ENCODE measurements at regions of chr17 and their contacts with region 1.

Region 1: DNA sequence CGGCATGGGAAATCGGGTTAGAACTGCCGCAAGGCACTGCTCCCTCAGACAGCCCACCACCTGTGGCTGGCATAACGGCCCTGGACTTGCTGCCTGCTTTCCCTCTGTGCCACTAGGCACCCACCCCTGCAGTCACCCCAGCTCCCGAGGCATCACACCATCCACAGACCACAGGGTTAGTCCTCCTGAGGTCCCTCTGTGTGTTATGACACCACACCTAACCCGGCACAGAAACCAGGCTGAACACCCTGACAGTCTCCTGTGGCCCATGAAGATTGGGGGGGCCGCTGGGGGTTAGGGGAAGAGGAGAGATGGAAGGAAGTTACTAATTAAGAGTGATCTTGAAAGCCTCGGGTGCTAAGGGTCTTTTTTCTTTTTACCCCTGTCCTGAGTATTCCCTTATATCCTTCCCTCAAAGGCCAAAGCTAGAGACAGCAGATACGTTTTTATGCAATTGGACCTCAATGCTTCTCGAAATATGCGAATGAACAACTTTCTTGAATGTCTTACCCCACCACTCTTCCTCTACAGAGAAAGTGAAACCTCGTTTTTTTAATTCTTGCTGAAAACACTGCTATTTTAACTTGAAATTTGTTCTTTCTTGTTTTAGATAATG is 7.0 kb downstream of the CYTH1 start:
- DNase-seq: peak; percentile 86
- H3K4me3 Mint-ChIP-seq: peak overlapping the region; percentile 82
- H3K27ac Mint-ChIP-seq: peak overlapping the region; percentile 97
- H3K4me1 Mint-ChIP-seq: peaks cover 65% of the 10 kb centered on the region
- H3K27me3 Mint-ChIP-seq: no peaks in the 10 kb centered on the region

Region 2: DNA sequence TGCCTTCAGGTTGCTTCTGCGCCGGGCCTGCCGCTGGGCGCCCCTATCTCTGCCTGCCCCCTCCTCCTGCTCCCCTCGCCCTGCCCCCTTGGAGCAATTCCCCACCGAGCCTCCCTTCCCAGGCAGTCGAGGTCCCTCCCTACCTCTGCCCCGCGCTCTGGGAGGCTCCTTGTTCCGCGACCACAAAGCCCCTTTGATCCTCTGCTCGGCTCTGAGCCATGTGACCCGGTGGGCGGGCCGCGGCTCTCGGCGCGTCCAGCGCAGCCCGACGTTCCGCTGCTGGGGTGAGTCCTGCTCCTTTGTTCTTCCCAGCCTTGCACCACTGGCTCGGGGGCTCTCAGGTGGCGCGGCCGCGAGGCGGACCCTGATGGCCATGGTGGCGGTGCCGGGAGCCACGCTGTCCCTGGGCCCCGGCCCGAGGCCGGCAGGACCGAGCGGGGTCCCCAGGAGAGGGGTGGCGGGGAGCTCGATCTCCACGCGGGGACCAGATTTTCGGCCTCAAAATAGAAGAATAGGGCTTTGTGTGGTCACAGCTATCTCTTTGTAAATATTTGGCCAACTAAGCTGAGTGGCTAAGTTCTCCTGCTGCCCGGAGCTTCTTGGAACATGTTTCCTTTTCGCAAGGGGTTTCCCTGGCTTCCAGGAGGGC is 1323.7 kb before region 1 on chr17:
- CTCF ChIA-PET with region 1: no interaction called
- intact Hi-C with region 1: loop called (anchors 10 kb)
- DNase-seq: peak; percentile 83
- H3K4me3 Mint-ChIP-seq: peak overlapping the region; percentile 86
- H3K27ac Mint-ChIP-seq: peak overlapping the region; percentile 100
- H3K4me1 Mint-ChIP-seq: peaks cover 42% of the 10 kb centered on the region
- H3K27me3 Mint-ChIP-seq: no peaks in the 10 kb centered on the region

Region 3: DNA sequence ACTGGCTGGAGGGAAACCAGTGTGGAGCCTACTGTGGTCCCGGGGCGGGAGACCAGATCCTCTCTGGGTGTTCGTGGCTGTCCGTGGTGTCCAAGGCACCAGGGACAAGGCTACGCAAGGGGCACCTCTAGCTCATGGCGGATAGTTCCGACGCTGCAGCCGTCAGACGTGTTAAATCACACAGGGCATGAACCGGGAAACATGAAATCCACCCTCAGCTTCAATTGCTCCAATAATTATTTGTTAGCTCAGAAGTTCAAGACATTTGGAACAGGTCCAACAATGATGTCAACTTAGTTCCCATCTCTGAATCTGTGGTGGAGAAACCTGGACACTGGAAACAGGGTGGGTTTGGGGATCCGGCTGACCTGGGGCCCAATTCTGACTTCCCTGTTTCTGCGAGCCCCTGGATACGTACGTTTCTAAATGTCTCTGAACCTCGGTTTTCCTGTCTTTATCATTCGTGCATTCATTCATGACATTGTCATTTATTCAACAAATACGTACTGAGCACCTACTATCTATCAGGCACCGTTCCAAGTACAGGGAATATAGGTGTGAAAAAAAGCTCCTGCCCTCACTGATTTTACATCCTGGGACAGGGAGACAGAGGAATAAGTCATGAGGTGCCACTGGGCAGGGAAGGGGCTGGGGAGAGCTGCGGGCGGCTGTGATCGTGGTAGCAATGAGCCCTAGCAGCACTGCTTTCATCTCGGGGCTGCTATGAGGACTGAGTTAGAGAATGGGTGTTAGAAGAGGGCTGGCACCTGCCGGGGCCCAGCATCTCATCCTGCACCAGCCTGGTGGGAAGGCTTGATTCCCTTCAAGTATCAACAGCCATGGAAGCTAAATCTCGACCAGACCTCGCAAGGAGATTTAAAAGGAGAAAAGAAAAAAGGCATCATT is 109.8 kb before region 1 on chr17:
- CTCF ChIA-PET with region 1: no interaction called
- intact Hi-C with region 1: no loop called
- DNase-seq: no peak
- H3K4me3 Mint-ChIP-seq: no peak overlapping the region
- H3K27ac Mint-ChIP-seq: peak overlapping the region; percentile 7
- H3K4me1 Mint-ChIP-seq: peaks cover 21% of the 10 kb centered on the region
- H3K27me3 Mint-ChIP-seq: no peaks in the 10 kb centered on the region

Region 4: GRCh38 chr17:78828470-78829185 is 53.6 kb after region 1 on chr17:
- CTCF ChIA-PET with region 1: no interaction called
- intact Hi-C with region 1: no loop called
- DNase-seq: peak; percentile 56
- H3K4me3 Mint-ChIP-seq: no peak overlapping the region
- H3K27ac Mint-ChIP-seq: peak overlapping the region; percentile 74
- H3K4me1 Mint-ChIP-seq: peaks cover 21% of the 10 kb centered on the region
- H3K27me3 Mint-ChIP-seq: no peaks in the 10 kb centered on the region

Region 5: GRCh38 chr17:78960928-78961327 is 185.9 kb after region 1 on chr17:
- CTCF ChIA-PET with region 1: no interaction called
- intact Hi-C with region 1: no loop called
- DNase-seq: no peak
- H3K4me3 Mint-ChIP-seq: no peak overlapping the region
- H3K27ac Mint-ChIP-seq: no peak overlapping the region
- H3K4me1 Mint-ChIP-seq: no peaks in the 10 kb centered on the region
- H3K27me3 Mint-ChIP-seq: no peaks in the 10 kb centered on the region

Measured in activated naive CD4-positive, alpha-beta T cell treated with anti-CD3 and anti-CD28 coated beads for 36 hours (primary cell).